GM23248 (cell line): ENCODE measurements at regions of chr17 and their contacts with region 1.

Region 1: GRCh38 chr17:46841561-46842379 is 9.6 kb upstream of the WNT9B start:
- DNase-seq: peak; percentile 58
- H3K4me3 ChIP-seq: peak overlapping the region; percentile 68
- H3K27ac ChIP-seq: no peak overlapping the region
- H3K4me1 ChIP-seq: no peaks in the 10 kb centered on the region
- H3K27me3 ChIP-seq: peaks cover 22% of the 10 kb centered on the region

Region 2: GRCh38 chr17:46764709-46765401 is 76.9 kb before region 1 on chr17:
- in situ Hi-C with region 1: no loop called
- DNase-seq: peak; percentile 83
- H3K4me3 ChIP-seq: no peak overlapping the region
- H3K27ac ChIP-seq: peak overlapping the region; percentile 48
- H3K4me1 ChIP-seq: peaks cover 27% of the 10 kb centered on the region
- H3K27me3 ChIP-seq: no peaks in the 10 kb centered on the region

Region 3: DNA sequence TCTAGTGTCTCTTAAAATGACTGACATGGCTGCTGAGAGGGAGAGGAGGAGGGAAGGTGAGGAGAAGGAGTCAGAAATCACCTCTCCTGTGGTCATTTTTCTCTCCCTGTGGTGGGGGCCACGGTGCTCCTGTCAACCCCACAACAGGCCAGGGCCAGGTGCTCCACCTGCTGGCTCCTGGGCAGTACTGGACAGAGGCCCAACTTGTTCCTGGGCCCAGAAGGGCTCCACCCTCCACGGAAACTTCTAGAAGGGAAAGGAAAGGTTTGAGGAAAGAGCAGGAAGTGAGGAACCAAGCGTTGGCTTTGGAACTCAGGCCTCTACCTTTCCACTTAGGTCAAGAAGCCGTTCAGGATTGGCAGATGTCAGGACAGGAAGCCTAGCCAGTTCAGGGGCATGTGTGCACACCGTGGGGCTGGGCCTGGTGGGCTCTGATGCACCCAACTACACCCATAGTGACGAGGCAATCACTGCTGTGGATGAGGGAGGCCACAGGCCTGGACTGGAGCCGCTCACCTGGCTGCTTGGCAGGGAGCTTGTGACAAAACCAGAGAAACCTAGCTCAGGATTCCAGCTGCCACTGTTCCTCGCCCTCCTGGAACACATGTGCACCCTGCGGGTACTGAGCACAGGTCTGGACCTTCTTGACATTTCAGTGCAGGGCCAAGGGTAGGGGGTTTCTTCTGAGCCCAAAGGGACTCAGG is 59.4 kb before region 1 on chr17:
- in situ Hi-C with region 1: no loop called
- DNase-seq: peak; percentile 54
- H3K4me3 ChIP-seq: no peak overlapping the region
- H3K27ac ChIP-seq: no peak overlapping the region
- H3K4me1 ChIP-seq: no peaks in the 10 kb centered on the region
- H3K27me3 ChIP-seq: no peaks in the 10 kb centered on the region

Region 4: GRCh38 chr17:46916211-46916610 is 74.4 kb after region 1 on chr17:
- in situ Hi-C with region 1: no loop called
- DNase-seq: peak; percentile 31
- H3K4me3 ChIP-seq: no peak overlapping the region
- H3K27ac ChIP-seq: no peak overlapping the region
- H3K4me1 ChIP-seq: no peaks in the 10 kb centered on the region
- H3K27me3 ChIP-seq: no peaks in the 10 kb centered on the region

Region 5: DNA sequence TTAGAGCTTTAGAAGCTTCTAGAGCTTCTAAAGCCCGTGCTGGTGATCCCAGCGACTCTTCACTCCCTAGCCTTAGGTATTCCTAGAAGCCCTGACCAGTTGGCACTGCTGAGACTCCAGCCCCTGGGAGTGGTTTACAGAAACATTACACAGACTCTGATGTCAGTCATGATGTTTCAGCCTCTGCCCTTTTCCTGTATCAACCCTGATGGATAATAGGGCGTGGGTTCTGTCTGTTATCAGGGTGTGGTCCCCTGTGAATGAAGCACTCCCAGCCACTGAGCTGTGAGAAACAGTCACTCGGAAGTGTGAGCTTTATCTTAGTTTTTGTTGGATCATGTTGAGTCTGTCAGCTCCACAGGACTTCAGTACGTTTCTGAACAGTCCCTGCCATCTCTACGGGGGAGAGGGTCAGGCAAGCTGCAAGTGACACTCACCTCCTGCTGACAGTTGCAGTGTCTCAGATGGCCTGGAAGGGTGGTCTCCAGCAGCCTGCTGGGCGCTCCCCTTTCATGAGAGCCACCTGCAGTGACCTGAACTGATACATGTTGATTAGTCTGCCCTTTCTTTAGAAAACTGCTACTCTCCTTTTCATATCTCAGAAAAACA is 94.0 kb after region 1 on chr17:
- in situ Hi-C with region 1: loop called (anchors 10 kb)
- DNase-seq: peak; percentile 27
- H3K4me3 ChIP-seq: no peak overlapping the region
- H3K27ac ChIP-seq: no peak overlapping the region
- H3K4me1 ChIP-seq: no peaks in the 10 kb centered on the region
- H3K27me3 ChIP-seq: no peaks in the 10 kb centered on the region

Region 6: DNA sequence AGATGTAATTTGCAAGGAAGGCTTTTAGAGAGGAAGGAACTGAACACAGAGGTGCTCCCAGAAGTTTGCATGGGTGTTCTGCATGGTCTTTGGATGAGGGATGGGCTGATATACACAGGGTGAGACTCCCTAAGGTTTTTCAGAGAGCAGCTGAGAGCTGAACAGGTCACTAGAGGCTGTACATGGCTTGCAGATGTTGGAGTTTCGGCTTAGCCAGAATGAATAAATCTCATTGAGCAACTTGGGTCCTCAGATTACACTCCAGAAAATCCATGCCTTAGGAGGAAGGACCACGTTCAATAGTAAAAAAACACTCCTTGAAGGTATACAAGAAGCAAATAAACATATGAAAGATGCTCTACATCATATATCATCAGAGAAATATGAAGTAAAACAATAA is 404.4 kb after region 1 on chr17:
- in situ Hi-C with region 1: no loop called
- DNase-seq: peak; percentile 26
- H3K4me3 ChIP-seq: no peak overlapping the region
- H3K27ac ChIP-seq: no peak overlapping the region
- H3K4me1 ChIP-seq: 0 out of 2 replicates have a peak, but pooled peaks cover 5% of the 10 kb centered on the region
- H3K27me3 ChIP-seq: no peaks in the 10 kb centered on the region